ENCODE measurements at regions of chr17 and their contacts with region 1.

Region 1: GRCh38 chr17:2854519-2855055 is 58.3 kb downstream of the RAP1GAP2 start:
- DNase-seq: peak; percentile 47
- H3K4me3 Mint-ChIP-seq: peak overlapping the region; percentile 82
- H3K27ac Mint-ChIP-seq: no peak overlapping the region
- H3K4me1 Mint-ChIP-seq: no peaks in the 10 kb centered on the region
- H3K27me3 Mint-ChIP-seq: no peaks in the 10 kb centered on the region
- CTCF ChIP-seq: no peak

Region 2: GRCh38 chr17:2782055-2782454 is 72.5 kb before region 1 on chr17:
- CTCF ChIA-PET with region 1: no interaction called
- intact Hi-C with region 1: no loop called
- DNase-seq: no peak
- H3K4me3 Mint-ChIP-seq: no peak overlapping the region
- H3K27ac Mint-ChIP-seq: no peak overlapping the region
- H3K4me1 Mint-ChIP-seq: peaks cover 1% of the 10 kb centered on the region
- H3K27me3 Mint-ChIP-seq: peaks cover 52% of the 10 kb centered on the region
- CTCF ChIP-seq: no peak

Region 3: GRCh38 chr17:2883567-2884101 is 29.0 kb after region 1 on chr17:
- CTCF ChIA-PET with region 1: interaction called, 11 read pairs
- intact Hi-C with region 1: no loop called
- DNase-seq: no peak
- H3K4me3 Mint-ChIP-seq: no peak overlapping the region
- H3K27ac Mint-ChIP-seq: no peak overlapping the region
- H3K4me1 Mint-ChIP-seq: no peaks in the 10 kb centered on the region
- H3K27me3 Mint-ChIP-seq: no peaks in the 10 kb centered on the region
- CTCF ChIP-seq: no peak